Endothelial cell of umbilical vein (primary cell): ENCODE measurements at regions of chr9 and their contacts with region 1.

Region 1: GRCh38 chr9:137029058-137029936 is 1.3 kb upstream of the ABCA2 start:
- DNase-seq: peak; percentile 59
- H3K4me3 ChIP-seq: no peak overlapping the region
- H3K27ac ChIP-seq: no peak overlapping the region
- H3K4me1 ChIP-seq: peaks cover 12% of the 10 kb centered on the region
- H3K27me3 ChIP-seq: no peaks in the 10 kb centered on the region
- CTCF ChIP-seq: peak; percentile 90 to 98
- POLR2A ChIP-seq: no peak

Region 2: DNA sequence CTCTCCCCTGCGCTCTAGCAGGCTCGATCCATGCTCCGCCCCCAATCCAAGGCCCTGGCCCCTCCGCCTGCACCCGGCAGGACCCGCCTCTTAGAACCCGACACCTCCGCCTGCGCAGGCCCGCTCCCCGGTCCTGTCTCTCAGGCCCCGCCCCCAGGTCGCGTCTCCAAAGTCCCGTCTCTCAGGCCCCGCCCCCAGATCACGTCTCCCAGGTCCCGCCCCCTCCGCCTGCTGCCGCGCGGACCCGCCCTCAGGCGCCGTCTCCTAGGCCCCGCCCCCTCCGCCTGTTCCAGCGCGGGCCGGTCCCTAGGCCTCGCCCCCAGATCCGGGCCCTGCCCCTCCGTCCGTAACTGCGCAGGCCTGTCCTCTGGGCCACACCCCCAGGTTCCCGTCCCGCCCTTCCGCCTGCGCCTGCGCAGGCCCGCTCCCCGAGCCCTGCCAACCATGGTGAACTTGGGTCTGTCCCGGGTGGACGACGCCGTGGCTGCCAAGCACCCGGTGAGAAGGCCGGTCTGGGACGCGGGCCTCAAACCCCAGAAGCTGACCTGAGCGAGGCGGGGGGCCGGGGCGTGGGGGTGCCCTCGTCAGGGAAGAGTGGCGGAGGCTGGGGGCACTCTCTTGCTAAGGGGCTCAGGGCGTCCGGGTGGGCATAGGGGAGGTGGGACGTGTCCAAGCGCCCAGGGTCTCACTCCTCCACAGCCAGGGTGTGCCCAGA is 238.2 kb before region 1 on chr9 and contains the start of gene TMEM141:
- CTCF ChIA-PET with region 1: interaction called, 19 read pairs
- POLR2A ChIA-PET with region 1: no interaction called
- dilution Hi-C with region 1: no loop called
- intact Hi-C with region 1: no loop called
- DNase-seq: peak; percentile 99
- H3K4me3 ChIP-seq: peak within 1 kb of the TSS; percentile 54 to 72 (median 59)
- H3K27ac ChIP-seq: peak within 1 kb of the TSS; percentile 31
- H3K4me1 ChIP-seq: peaks cover 7% of the 10 kb centered on the region
- H3K27me3 ChIP-seq: peaks cover 2 to 6% of the 10 kb centered on the region in 2 experiments
- CTCF ChIP-seq: no peak
- POLR2A ChIP-seq: peak; percentile 89
- total RNA-seq, gene TMEM141: 43.2 and 44.9 TPM in 2 replicates

Region 3: GRCh38 chr9:136978073-136978864 is 51.0 kb before region 1 on chr9:
- CTCF ChIA-PET with region 1: interaction called, 10 read pairs
- POLR2A ChIA-PET with region 1: no interaction called
- dilution Hi-C with region 1: no loop called
- intact Hi-C with region 1: loop called (anchors 2 kb)
- DNase-seq: peak; percentile 39
- H3K4me3 ChIP-seq: peak overlapping the region in 1 of 3 experiments; percentile 32
- H3K27ac ChIP-seq: no peak overlapping the region
- H3K4me1 ChIP-seq: peaks cover 4% of the 10 kb centered on the region
- H3K27me3 ChIP-seq: no peaks in the 10 kb centered on the region
- CTCF ChIP-seq: no peak
- POLR2A ChIP-seq: no peak

Region 4: GRCh38 chr9:137014166-137014565 is 15.1 kb before region 1 on chr9:
- CTCF ChIA-PET with region 1: interaction called, 10 read pairs
- POLR2A ChIA-PET with region 1: no interaction called
- dilution Hi-C with region 1: no loop called
- intact Hi-C with region 1: no loop called
- DNase-seq: no peak
- H3K4me3 ChIP-seq: no peak overlapping the region
- H3K27ac ChIP-seq: no peak overlapping the region
- H3K4me1 ChIP-seq: no peaks in the 10 kb centered on the region
- H3K27me3 ChIP-seq: no peaks in the 10 kb centered on the region
- CTCF ChIP-seq: no peak
- POLR2A ChIP-seq: no peak

Region 5: GRCh38 chr9:137064027-137064879 is 35.0 kb after region 1 on chr9:
- CTCF ChIA-PET with region 1: interaction called, 34 read pairs
- POLR2A ChIA-PET with region 1: no interaction called
- dilution Hi-C with region 1: no loop called
- intact Hi-C with region 1: loop called (anchors 1 kb)
- DNase-seq: peak; percentile 31
- H3K4me3 ChIP-seq: no peak overlapping the region
- H3K27ac ChIP-seq: no peak overlapping the region
- H3K4me1 ChIP-seq: peaks cover under 1% of the 10 kb centered on the region
- H3K27me3 ChIP-seq: no peaks in the 10 kb centered on the region
- CTCF ChIP-seq: peak; percentile 86 to 97
- POLR2A ChIP-seq: no peak

Region 6: GRCh38 chr9:137086531-137087408 is 57.5 kb after region 1 on chr9 and contains the start of gene MAN1B1:
- CTCF ChIA-PET with region 1: interaction called, 7 read pairs
- POLR2A ChIA-PET with region 1: no interaction called
- dilution Hi-C with region 1: no loop called
- intact Hi-C with region 1: loop called (anchors 2 kb)
- DNase-seq: peak; percentile 100
- H3K4me3 ChIP-seq: peak within 1 kb of the TSS; percentile 42 to 62 (median 47)
- H3K27ac ChIP-seq: peak within 1 kb of the TSS; percentile 48
- H3K4me1 ChIP-seq: peaks cover 28% of the 10 kb centered on the region
- H3K27me3 ChIP-seq: no peaks in the 10 kb centered on the region
- CTCF ChIP-seq: no peak
- POLR2A ChIP-seq: peak; percentile 89
- total RNA-seq, gene MAN1B1: 67.7 and 75.3 TPM in 2 replicates